ENCODE measurements at regions of chr1 and their contacts with region 1.

Region 1: DNA sequence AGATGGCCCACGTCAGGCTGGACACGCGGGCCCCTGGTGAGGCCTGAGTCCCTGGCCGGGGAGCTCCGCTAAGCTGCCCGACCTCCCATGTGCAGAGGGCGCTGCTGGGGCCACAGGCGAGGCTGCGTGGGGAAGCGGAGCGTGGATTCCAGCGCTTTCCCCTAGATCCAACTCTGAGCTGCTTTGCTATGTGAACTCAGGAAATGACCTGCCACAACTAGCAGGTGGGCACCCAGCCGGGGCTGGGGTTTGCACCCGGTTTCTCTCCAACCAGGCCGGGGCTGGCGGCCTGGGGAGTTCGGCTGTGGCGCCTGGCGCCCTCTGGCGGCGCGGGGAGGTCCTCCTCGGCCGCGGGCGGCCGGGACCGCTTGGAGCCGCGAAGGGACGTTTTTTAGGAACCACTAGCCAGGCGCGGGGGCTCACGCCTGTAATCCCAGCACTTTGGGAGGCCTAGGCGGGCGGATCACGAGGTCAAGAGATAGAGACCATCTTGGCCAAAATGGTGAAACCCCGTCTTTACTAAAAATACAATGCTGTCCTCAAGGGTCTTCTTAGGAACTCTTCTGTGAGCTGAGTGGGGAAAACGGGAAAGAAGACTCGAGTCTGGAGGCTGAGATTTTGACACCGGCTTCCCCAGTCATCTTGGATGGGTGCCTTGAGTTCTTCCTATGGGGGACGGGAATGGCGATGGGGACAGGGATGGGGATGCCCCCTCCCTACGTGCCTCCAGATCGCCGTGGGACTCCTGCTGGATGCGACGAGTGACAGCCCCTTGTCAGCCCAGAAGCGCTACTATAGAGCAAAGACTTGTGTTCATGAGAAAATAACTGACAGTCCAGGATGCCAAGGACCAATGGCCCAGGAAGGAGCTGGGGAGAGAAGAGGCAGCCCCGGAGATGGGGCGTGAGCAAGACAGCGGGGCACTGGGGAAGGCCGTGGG is 12.6 kb downstream of the PYCR2 start:
- DNase-seq: peak; percentile 78
- ATAC-seq: peak; percentile 94
- H3K4me3 Mint-ChIP-seq: no peak overlapping the region
- H3K27ac Mint-ChIP-seq: no peak overlapping the region
- H3K4me1 Mint-ChIP-seq: peaks cover 17% of the 10 kb centered on the region
- H3K27me3 Mint-ChIP-seq: no peaks in the 10 kb centered on the region
- CTCF ChIP-seq: peak; percentile 93

Region 2: GRCh38 chr1:225474986-225475820 is 436.3 kb before region 1 on chr1:
- CTCF ChIA-PET with region 1: interaction called, 16 read pairs
- POLR2A ChIA-PET with region 1: no interaction called
- intact Hi-C with region 1: loop called (anchors 5 kb)
- DNase-seq: peak; percentile 58
- ATAC-seq: peak; percentile 80
- H3K4me3 Mint-ChIP-seq: no peak overlapping the region
- H3K27ac Mint-ChIP-seq: no peak overlapping the region
- H3K4me1 Mint-ChIP-seq: peaks cover 41% of the 10 kb centered on the region
- H3K27me3 Mint-ChIP-seq: no peaks in the 10 kb centered on the region
- CTCF ChIP-seq: peak; percentile 100

Region 3: GRCh38 chr1:225777583-225778336 is 133.7 kb before region 1 on chr1 and contains the start of gene SRP9:
- CTCF ChIA-PET with region 1: interaction called, 17 read pairs
- POLR2A ChIA-PET with region 1: interaction called, 5 read pairs
- intact Hi-C with region 1: loop called (anchors 5 kb)
- DNase-seq: peak; percentile 99
- ATAC-seq: peak; percentile 97
- H3K4me3 Mint-ChIP-seq: no peak within 1 kb of the TSS
- H3K27ac Mint-ChIP-seq: no peak within 1 kb of the TSS
- H3K4me1 Mint-ChIP-seq: peaks cover 27% of the 10 kb centered on the region
- H3K27me3 Mint-ChIP-seq: no peaks in the 10 kb centered on the region
- CTCF ChIP-seq: peak; percentile 85
- total RNA-seq, gene SRP9: 275 to 304 TPM

Region 4: DNA sequence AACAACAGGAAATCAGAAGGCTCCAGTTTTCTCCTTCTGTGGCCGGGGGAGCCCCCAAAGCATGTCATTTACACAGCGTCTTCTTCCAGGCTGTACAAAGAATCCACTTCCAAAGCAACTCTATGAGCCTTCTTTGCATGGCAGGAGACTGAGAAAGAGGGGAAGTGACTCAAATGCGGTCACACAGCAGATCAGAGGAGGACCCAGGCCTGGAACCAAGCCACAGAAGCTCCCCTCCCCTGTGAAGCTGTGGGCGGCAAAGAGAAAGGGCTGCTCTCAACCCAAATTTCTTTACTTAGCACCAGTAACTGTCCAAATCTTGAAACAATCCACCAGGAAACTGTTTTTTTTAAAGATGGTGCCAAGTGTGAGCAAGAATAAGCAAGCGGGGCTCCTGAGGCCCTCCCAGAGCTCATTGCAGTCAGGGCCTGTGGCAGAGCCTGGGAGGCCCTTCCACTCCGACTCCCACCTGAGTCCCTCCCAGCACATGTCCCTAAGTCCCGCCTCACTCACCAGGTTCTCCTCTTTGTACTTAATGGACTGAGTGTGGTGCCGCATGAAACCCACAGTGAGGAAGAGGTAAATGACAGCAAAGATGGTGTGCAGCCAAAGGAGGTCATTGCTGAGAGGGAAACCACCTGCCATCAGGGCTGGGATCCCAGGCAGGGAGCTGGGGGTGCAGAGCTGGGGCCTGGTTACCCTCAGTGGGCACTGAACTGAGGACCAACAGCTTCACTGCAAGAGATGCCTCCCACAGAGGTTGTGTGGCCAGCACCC is 45.2 kb before region 1 on chr1:
- CTCF ChIA-PET with region 1: interaction called, 6 read pairs
- POLR2A ChIA-PET with region 1: no interaction called
- intact Hi-C with region 1: loop called (anchors 5 kb)
- DNase-seq: peak; percentile 90
- ATAC-seq: peak; percentile 91
- H3K4me3 Mint-ChIP-seq: peak overlapping the region; percentile 1
- H3K27ac Mint-ChIP-seq: peak overlapping the region; percentile 79
- H3K4me1 Mint-ChIP-seq: peaks cover 42% of the 10 kb centered on the region
- H3K27me3 Mint-ChIP-seq: no peaks in the 10 kb centered on the region
- CTCF ChIP-seq: no peak

Region 5: DNA sequence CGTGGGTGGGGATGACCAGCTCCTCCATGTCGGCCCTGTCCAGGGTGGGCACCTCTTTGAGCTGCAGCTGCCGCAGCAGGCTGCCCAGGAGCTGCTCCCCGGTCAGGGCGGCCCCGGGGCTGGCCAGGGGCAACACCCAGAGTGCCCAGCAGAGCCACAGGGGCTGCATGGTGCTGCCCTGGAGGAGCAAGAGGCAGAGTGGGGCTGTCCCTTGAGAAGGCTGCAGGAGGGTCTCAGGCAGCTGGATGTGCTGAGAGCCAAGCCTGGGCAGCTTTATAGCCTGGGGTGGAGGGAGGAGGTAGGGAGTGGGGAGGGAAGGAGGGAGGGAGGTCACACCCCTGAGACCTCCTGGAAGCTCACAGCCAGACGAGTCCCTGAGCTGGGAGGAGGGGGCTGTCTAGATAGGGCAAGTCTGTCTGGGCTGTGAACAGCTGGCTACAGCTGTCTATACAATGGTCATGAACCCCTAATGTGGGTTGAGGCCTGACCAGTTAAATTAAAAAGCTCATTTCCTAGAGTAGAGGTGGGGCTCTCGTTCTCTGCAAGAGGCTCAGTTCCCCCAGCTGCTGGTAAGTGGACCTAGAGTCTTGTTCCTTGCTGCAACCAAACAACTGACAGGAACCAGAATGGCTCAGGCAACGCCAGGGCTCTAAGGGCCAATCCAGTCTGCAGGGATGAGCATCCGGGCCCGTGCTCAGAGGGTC is 22.4 kb before region 1 on chr1 and contains the start of gene LEFTY1:
- CTCF ChIA-PET with region 1: interaction called, 32 read pairs
- POLR2A ChIA-PET with region 1: no interaction called
- intact Hi-C with region 1: no loop called
- DNase-seq: no peak
- ATAC-seq: no peak
- H3K4me3 Mint-ChIP-seq: no peak within 1 kb of the TSS
- H3K27ac Mint-ChIP-seq: no peak within 1 kb of the TSS
- H3K4me1 Mint-ChIP-seq: peaks cover 4% of the 10 kb centered on the region
- H3K27me3 Mint-ChIP-seq: no peaks in the 10 kb centered on the region
- CTCF ChIP-seq: no peak
- total RNA-seq, gene LEFTY1: 0.16 to 0.83 TPM

Region 6: GRCh38 chr1:225923692-225924555 is 12.5 kb after region 1 on chr1 and contains the start of gene PYCR2:
- CTCF ChIA-PET with region 1: interaction called, 37 read pairs
- POLR2A ChIA-PET with region 1: interaction called, 4 read pairs
- intact Hi-C with region 1: no loop called
- DNase-seq: peak; percentile 96
- ATAC-seq: peak; percentile 98
- H3K4me3 Mint-ChIP-seq: peak within 1 kb of the TSS; percentile 91
- H3K27ac Mint-ChIP-seq: peak within 1 kb of the TSS; percentile 97
- H3K4me1 Mint-ChIP-seq: peaks cover 52% of the 10 kb centered on the region
- H3K27me3 Mint-ChIP-seq: no peaks in the 10 kb centered on the region
- CTCF ChIP-seq: no peak
- total RNA-seq, gene PYCR2: 132 to 134 TPM

Measured in activated CD8-positive, alpha-beta T cell treated with anti-CD3 and anti-CD28 coated beads for 36 hours (primary cell).